Activated T-helper 2 cell treated with anti-CD3 and anti-CD28 coated beads, Interferon-gamma antibody, Interleukin-2, Interleukin-4, amounts not matched to agents 10 μg/mL and 5 μg/mL and 100 μg/mL, durations not matched to agents 14 hours and 24 hours and 36 hours (primary cell): ENCODE measurements at regions of chr14 and their contacts with region 1.

Region 1: DNA sequence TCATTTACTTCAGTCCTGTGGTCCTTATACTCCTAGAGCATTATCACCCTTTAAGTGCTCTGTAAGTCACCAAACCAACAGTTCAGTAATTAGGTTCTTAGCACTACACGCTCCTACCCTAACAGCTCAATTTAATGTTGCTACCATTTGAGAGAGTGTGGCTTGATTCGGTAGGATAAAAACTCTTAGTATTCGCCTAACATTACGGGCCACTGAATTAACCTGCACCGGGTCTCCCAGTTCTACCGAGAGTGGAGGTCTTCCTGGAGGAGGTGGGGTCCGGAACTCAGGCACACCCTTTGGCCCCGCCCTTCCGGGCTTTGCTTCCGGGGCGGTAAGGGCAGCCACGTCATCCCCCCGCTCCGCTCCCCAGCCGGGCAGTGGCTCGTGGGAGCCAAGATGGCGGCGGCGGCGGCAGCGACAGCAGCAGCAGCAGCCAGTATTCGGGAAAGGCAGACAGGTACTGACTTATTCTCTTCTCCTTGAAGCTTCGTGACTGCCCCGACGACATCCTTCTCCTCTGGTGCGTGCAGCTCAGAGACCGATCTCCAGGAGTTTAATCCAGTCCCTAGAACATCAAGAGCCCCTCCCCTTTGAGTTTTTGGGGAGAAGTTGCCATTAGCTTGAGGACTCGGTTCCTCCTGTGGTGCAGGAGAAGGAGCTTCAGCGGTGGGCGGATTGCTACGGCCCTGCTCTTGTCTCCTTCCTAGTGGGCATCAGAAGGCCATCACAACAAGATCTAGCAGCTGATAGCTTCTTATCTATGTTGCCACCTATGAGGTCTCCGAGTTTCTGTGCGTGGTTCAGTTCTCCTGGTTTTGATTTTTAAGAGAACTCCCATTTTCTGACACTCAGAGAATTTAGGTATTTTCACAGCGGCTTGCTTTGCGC is at the start of gene SCFD1:
- DNase-seq: peak; percentile 93
- H3K4me3 Mint-ChIP-seq: peak within 1 kb of the TSS; percentile 95
- H3K27ac Mint-ChIP-seq: peak within 1 kb of the TSS; percentile 94
- H3K4me1 Mint-ChIP-seq: peaks cover 29% of the 10 kb centered on the region
- H3K27me3 Mint-ChIP-seq: no peaks in the 10 kb centered on the region
- total RNA-seq, gene SCFD1: 72.8 and 76.1 TPM in 2 replicates

Region 2: DNA sequence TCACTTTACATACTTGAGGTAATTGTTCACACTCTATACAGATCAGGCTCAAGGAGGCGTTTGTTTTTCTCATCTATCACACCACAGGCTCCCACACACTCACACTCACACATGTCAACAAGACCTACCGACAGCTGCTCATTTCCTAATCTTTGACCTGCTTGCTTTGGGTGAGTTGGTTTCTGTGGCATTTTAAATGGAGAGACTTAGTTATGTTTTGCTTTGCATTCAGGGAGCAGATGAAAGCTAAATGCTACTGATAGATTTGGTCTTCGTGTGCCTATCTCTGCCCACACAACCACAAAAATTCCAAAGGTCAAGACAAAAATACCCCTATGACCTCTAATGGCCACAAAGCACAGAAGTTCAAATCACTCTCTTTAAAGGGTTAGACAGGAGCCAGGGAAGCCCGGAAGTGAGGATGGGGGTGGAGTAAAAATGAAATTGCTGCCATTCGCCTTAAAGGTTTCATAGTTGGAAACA is 266.7 kb before region 1 on chr14:
- intact Hi-C with region 1: loop called (anchors 10 kb)
- DNase-seq: no peak
- H3K4me3 Mint-ChIP-seq: no peak overlapping the region
- H3K27ac Mint-ChIP-seq: peak overlapping the region; percentile 81
- H3K4me1 Mint-ChIP-seq: peaks cover 25% of the 10 kb centered on the region
- H3K27me3 Mint-ChIP-seq: peaks cover under 1% of the 10 kb centered on the region

Region 3: GRCh38 chr14:30532264-30532663 is 89.9 kb before region 1 on chr14:
- intact Hi-C with region 1: no loop called
- DNase-seq: no peak
- H3K4me3 Mint-ChIP-seq: no peak overlapping the region
- H3K27ac Mint-ChIP-seq: no peak overlapping the region
- H3K4me1 Mint-ChIP-seq: no peaks in the 10 kb centered on the region
- H3K27me3 Mint-ChIP-seq: peaks cover 10% of the 10 kb centered on the region

Region 4: GRCh38 chr14:30558675-30559555 is 63.3 kb before region 1 on chr14 and contains the start of gene G2E3:
- intact Hi-C with region 1: loop called (anchors 1 kb)
- DNase-seq: peak; percentile 89
- H3K4me3 Mint-ChIP-seq: peak within 1 kb of the TSS; percentile 99
- H3K27ac Mint-ChIP-seq: peak within 1 kb of the TSS; percentile 100
- H3K4me1 Mint-ChIP-seq: peaks cover 25% of the 10 kb centered on the region
- H3K27me3 Mint-ChIP-seq: no peaks in the 10 kb centered on the region
- total RNA-seq, gene G2E3: 24.7 and 26.4 TPM in 2 replicates

Region 5: GRCh38 chr14:30603404-30603803 is 18.8 kb before region 1 on chr14:
- intact Hi-C with region 1: loop called (anchors 1 kb)
- DNase-seq: no peak
- H3K4me3 Mint-ChIP-seq: no peak overlapping the region
- H3K27ac Mint-ChIP-seq: no peak overlapping the region
- H3K4me1 Mint-ChIP-seq: peaks cover 2% of the 10 kb centered on the region
- H3K27me3 Mint-ChIP-seq: no peaks in the 10 kb centered on the region

Region 6: GRCh38 chr14:30638926-30639325 is 16.7 kb after region 1 on chr14:
- intact Hi-C with region 1: no loop called
- DNase-seq: no peak
- H3K4me3 Mint-ChIP-seq: no peak overlapping the region
- H3K27ac Mint-ChIP-seq: no peak overlapping the region
- H3K4me1 Mint-ChIP-seq: peaks cover 1% of the 10 kb centered on the region
- H3K27me3 Mint-ChIP-seq: no peaks in the 10 kb centered on the region

Region 7: DNA sequence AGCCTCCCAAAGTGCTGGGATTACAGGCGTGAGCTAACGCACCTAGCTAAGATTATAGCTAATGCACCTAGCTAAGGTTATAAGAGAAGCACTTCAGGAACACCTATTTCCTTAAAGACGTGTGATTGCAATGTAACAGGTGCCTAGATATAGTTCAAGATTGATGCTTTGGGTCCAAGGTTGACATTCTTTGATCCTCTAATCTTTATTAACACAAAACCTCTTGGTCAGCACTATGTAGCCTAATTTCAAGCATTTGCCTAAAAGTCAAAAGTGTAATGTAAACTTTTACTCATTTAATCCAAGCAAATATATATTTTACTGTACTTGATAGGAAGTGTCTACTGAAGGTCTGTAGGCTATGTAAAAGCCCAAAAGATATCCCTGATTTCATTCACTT is 36.5 kb after region 1 on chr14:
- intact Hi-C with region 1: no loop called
- DNase-seq: no peak
- H3K4me3 Mint-ChIP-seq: no peak overlapping the region
- H3K27ac Mint-ChIP-seq: no peak overlapping the region
- H3K4me1 Mint-ChIP-seq: no peaks in the 10 kb centered on the region
- H3K27me3 Mint-ChIP-seq: no peaks in the 10 kb centered on the region

Region 8: DNA sequence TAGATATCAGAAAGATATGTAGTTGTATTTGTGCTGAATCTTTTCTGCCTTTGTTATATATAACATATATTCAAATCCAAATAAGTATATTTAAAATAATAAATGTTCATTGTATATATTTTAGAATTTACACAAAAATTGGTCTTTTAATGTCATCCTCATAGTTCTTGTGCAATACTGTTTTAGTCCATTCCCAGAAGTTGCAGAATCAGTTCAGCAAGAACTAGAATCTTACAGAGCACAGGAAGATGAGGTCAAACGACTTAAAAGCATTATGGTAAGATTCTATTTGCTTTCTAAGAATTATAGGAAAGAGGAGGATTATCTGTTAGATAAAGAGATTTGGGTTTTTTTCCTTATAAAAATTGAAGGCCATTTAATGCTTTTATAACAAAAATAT is 50.9 kb after region 1 on chr14:
- intact Hi-C with region 1: no loop called
- DNase-seq: no peak
- H3K4me3 Mint-ChIP-seq: no peak overlapping the region
- H3K27ac Mint-ChIP-seq: no peak overlapping the region
- H3K4me1 Mint-ChIP-seq: peaks cover 2% of the 10 kb centered on the region
- H3K27me3 Mint-ChIP-seq: no peaks in the 10 kb centered on the region